ENCODE measurements at regions of chr6 and their contacts with region 1.

Region 1: GRCh38 chr6:41895300-41896233 is at the start of gene USP49:
- DNase-seq: peak; percentile 91 to 97
- ATAC-seq: peak; percentile 98
- H3K4me3 ChIP-seq: peak within 1 kb of the TSS; percentile 82 to 99
- H3K27ac ChIP-seq: peak within 1 kb of the TSS in 1 of 2 donors; percentile 41
- H3K4me1 ChIP-seq: peaks cover 0 to 2% of the 10 kb centered on the region in 2 donors
- H3K27me3 ChIP-seq: no peaks in the 10 kb centered on the region
- total RNA-seq, gene USP49: 2.3 to 5.3 TPM

Region 2: GRCh38 chr6:42050266-42051032 is 154.9 kb after region 1 on chr6 and contains the start of gene TAF8:
- intact Hi-C with region 1: loop called in 1 of 2 experiments (anchors 1 kb)
- DNase-seq: peak; percentile 95 to 97
- ATAC-seq: peak; percentile 95
- H3K4me3 ChIP-seq: peak within 1 kb of the TSS; percentile 39 to 77
- H3K27ac ChIP-seq: peak within 1 kb of the TSS in 1 of 2 donors; percentile 39
- H3K4me1 ChIP-seq: peaks cover 0 to 2% of the 10 kb centered on the region in 2 donors
- H3K27me3 ChIP-seq: no peaks in the 10 kb centered on the region
- total RNA-seq, gene TAF8: 24.2 to 28.6 TPM

Region 3: GRCh38 chr6:42304053-42304712 is 408.6 kb after region 1 on chr6:
- intact Hi-C with region 1: no loop called
- DNase-seq: no peak
- ATAC-seq: no peak
- H3K4me3 ChIP-seq: no peak overlapping the region
- H3K27ac ChIP-seq: no peak overlapping the region
- H3K4me1 ChIP-seq: no peaks in the 10 kb centered on the region
- H3K27me3 ChIP-seq: no peaks in the 10 kb centered on the region

Measured in aorta (tissue), 5 donors.